Sciatic nerve (tissue), 2 donors: ENCODE measurements at regions of chr4 and their contacts with region 1.

Region 1: GRCh38 chr4:143207557-143207956 is 22.8 kb downstream of the USP38 start:
- DNase-seq: no peak
- ATAC-seq: peak; percentile 89

Region 2: GRCh38 chr4:143482840-143483239 is 275.3 kb after region 1 on chr4:
- intact Hi-C with region 1: loop called (anchors 10 kb)
- DNase-seq: no peak
- ATAC-seq: peak; percentile 83

Region 3: DNA sequence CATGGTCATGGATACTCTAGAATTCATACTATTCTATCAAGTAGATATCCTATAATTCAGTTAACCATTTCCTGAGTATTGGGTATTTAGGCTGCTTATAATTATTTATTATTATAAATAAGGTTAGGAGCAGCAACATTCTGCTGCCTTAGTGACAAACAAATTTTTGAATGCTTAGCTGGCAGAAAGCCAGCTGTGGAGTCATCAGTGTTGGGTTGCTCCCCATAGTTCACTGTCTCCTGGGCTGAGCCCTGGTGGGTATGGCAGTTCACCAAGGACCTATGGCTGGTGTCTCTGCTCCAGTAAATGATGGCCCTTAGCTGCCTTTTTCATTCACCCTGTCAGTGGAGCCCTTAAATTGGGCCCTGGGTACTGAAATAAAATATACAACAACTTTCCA is 367.8 kb after region 1 on chr4:
- intact Hi-C with region 1: no loop called
- DNase-seq: no peak
- ATAC-seq: no peak